CD8-positive, alpha-beta memory T cell (primary cell): ENCODE measurements at regions of chr12 and their contacts with region 1.

Region 1: GRCh38 chr12:56189176-56189917 is at the start of gene SMARCC2:
- DNase-seq: peak; percentile 80 to 90 (median 84)
- H3K4me3 ChIP-seq: peak within 1 kb of the TSS; percentile 95
- H3K4me3 Mint-ChIP-seq: peak within 1 kb of the TSS; percentile 92 to 99 (median 97)
- H3K27ac ChIP-seq: peak within 1 kb of the TSS; percentile 84
- H3K27ac Mint-ChIP-seq: peak within 1 kb of the TSS; percentile 93 to 100 (median 98)
- H3K4me1 ChIP-seq: peaks cover 31% of the 10 kb centered on the region
- H3K4me1 Mint-ChIP-seq: peaks cover 40 to 54% (median 52%) of the 10 kb centered on the region in 3 donors
- H3K27me3 ChIP-seq: no peaks in the 10 kb centered on the region
- H3K27me3 Mint-ChIP-seq: peaks cover 0 to 8% of the 10 kb centered on the region in 2 donors
- total RNA-seq, gene SMARCC2: 107 to 118 TPM

Region 2: DNA sequence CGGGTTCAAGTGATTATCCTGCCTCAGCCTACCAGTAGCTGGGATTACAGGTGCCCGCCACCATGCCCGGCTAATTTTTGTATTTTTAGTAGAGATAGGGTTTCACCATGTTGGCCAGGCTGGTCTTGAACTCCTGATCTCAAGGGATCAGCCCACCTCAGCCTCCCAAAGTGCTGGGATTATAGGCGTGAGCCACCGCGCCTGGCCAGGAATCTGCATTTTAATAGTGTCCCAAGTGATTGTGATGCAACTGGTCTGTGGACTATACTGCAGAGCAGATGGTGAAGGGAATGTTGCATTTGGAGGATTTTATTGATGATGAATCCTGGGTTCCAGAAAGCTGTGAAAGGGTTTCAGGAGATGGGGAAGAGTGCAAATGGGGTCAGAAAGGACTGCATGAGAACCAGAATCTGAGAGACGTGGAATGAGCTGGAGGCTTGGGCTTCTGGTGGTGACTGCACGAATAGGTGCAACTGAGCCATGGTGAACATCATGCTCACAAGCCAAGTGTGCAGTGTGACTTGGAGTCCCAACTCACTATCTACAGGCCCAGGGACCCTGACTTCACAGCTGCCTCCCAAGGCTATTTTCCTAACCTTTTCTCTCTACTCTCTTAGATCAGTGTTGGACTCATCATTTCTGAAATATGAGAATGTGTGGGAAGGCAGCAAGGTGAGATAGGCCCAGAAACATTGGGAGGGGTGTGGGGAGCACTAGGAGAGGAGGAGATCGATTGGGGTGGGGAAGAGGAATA is 143.1 kb before region 1 on chr12:
- CTCF ChIA-PET with region 1: interaction called, 16 read pairs
- POLR2A ChIA-PET with region 1: interaction called, 9 read pairs
- DNase-seq: no peak
- H3K4me3 ChIP-seq: no peak overlapping the region
- H3K4me3 Mint-ChIP-seq: no peak overlapping the region
- H3K27ac ChIP-seq: no peak overlapping the region
- H3K27ac Mint-ChIP-seq: peak overlapping the region in 7 of 8 donors; percentile 50 to 83 (median 63)
- H3K4me1 ChIP-seq: peaks cover 15% of the 10 kb centered on the region
- H3K4me1 Mint-ChIP-seq: peaks cover 26 to 29% (median 29%) of the 10 kb centered on the region in 3 donors
- H3K27me3 ChIP-seq: no peaks in the 10 kb centered on the region
- H3K27me3 Mint-ChIP-seq: peaks cover 0 to 5% of the 10 kb centered on the region in 2 donors

Region 3: DNA sequence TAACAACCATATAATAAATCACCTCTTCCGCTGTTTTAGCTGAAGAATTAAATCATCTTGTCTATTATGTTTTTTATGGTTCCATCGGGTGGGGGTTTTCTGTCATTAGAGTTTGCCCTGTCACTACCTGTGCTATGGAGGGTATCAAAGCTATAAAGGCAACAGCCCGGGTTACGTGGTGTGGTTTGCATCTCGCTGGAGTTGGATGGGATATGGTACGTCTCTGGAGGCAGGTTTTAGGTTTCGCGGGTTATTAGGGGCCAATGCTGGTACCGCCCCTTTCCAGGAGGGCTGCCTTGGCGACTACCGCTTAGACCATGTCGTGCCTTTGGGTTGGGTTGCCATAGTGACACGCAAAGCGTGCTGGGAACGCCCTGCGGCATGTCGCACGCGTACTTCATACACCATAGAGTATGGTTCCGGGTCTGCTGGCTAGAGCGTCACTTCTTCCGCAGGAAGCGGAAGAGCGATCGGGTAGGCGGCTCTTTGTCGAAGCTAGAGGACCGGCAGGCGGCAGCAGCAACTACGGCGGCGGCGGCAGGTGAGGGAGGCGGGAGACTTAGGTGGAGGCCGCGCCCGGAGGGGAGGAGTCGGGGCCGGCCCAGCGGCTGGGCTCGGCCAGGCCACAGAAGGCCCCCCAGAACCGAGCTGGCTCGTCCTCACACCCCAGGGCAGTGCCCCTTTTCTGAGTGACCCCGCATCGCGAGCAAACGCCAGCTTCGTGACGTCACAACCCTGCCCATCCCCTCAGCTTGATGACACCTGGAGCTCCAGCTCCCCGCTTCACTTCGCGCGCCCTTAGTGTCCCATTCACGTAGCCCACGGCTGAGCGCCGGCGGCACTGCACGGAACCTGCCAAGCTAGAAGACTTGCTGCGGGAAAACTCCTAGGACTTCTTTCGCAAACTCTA is 71.3 kb before region 1 on chr12 and contains the start of gene ZC3H10:
- CTCF ChIA-PET with region 1: interaction called, 101 read pairs
- POLR2A ChIA-PET with region 1: interaction called, 60 read pairs
- DNase-seq: peak; percentile 93 to 100 (median 98)
- H3K4me3 ChIP-seq: peak within 1 kb of the TSS; percentile 93
- H3K4me3 Mint-ChIP-seq: peak within 1 kb of the TSS; percentile 89 to 100 (median 99)
- H3K27ac ChIP-seq: peak within 1 kb of the TSS; percentile 99
- H3K27ac Mint-ChIP-seq: peak within 1 kb of the TSS; percentile 96 to 100 (median 98)
- H3K4me1 ChIP-seq: peaks cover 34% of the 10 kb centered on the region
- H3K4me1 Mint-ChIP-seq: peaks cover 37 to 43% (median 38%) of the 10 kb centered on the region in 3 donors
- H3K27me3 ChIP-seq: no peaks in the 10 kb centered on the region
- H3K27me3 Mint-ChIP-seq: peaks cover 0 to 10% of the 10 kb centered on the region in 2 donors
- total RNA-seq, gene ZC3H10: 8.1 to 9.0 TPM

Region 4: GRCh38 chr12:56137853-56138571 is 51.3 kb before region 1 on chr12:
- CTCF ChIA-PET with region 1: interaction called, 10 read pairs
- POLR2A ChIA-PET with region 1: no interaction called
- DNase-seq: peak in 1 of 5 donors; percentile 52
- H3K4me3 ChIP-seq: no peak overlapping the region
- H3K4me3 Mint-ChIP-seq: peak overlapping the region in 4 of 7 donors; percentile 25 to 54 (median 42)
- H3K27ac ChIP-seq: no peak overlapping the region
- H3K27ac Mint-ChIP-seq: peak overlapping the region; percentile 46 to 87 (median 75)
- H3K4me1 ChIP-seq: peaks cover 68% of the 10 kb centered on the region
- H3K4me1 Mint-ChIP-seq: peaks cover 48 to 55% (median 54%) of the 10 kb centered on the region in 3 donors
- H3K27me3 ChIP-seq: no peaks in the 10 kb centered on the region
- H3K27me3 Mint-ChIP-seq: no peaks in the 10 kb centered on the region

Region 5: DNA sequence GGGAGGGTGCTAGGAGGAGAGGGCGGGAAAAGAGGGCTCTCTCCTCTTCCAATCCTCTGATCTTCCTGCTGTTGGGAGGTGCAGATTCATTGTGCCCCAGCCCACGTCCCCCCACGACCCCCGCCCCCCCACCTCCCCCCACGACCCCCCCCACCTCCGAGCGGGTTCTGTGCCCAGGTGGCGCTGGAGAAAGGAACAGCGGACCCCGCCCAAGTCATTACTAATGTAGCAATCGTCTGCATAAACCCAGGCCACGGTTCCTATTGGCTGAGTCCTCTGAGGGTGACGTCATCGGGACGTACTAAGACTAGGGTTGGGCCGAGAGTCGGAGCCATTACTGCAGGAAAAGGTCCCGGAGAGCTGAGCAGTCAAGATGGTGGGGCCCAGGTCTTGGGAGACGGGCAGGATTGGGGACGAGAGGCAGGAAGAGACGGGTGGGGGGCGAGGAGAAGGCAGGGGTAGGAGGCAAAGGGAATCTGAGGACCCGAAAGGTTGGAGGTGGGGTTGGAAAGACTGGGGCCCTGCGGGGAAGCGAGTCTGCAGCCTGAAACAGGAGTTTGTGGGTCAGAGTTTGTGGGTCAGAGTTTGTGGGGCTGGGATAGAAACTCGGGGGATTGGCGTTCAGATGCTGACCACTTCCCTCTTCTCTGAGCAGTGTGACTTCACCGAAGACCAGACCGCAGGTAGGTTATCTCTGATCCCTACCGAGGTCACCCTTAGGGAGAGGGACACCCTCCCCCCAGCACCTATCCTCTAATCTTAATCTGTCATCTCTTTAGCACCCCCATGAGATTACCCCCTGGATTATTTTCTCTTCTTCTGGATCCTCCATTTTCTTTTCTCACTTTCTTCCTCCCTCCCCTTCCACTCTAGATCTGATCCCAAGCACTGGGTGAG is 31.1 kb before region 1 on chr12 and contains the start of gene MYL6:
- CTCF ChIA-PET with region 1: interaction called, 23 read pairs
- POLR2A ChIA-PET with region 1: interaction called, 11 read pairs
- DNase-seq: peak; percentile 84 to 96 (median 88)
- H3K4me3 ChIP-seq: peak within 1 kb of the TSS; percentile 80
- H3K4me3 Mint-ChIP-seq: peak within 1 kb of the TSS; percentile 92 to 100 (median 95)
- H3K27ac ChIP-seq: peak within 1 kb of the TSS; percentile 94
- H3K27ac Mint-ChIP-seq: peak within 1 kb of the TSS; percentile 87 to 100 (median 96)
- H3K4me1 ChIP-seq: peaks cover 38% of the 10 kb centered on the region
- H3K4me1 Mint-ChIP-seq: peaks cover 38 to 48% (median 41%) of the 10 kb centered on the region in 3 donors
- H3K27me3 ChIP-seq: no peaks in the 10 kb centered on the region
- H3K27me3 Mint-ChIP-seq: no peaks in the 10 kb centered on the region
- total RNA-seq, gene MYL6: 1,010 to 1,017 TPM

Region 6: GRCh38 chr12:56206457-56207166 is 17.3 kb after region 1 on chr12:
- CTCF ChIA-PET with region 1: interaction called, 16 read pairs
- POLR2A ChIA-PET with region 1: interaction called, 3 read pairs
- DNase-seq: peak in 3 of 5 donors; percentile 12 to 57 (median 14)
- H3K4me3 ChIP-seq: no peak overlapping the region
- H3K4me3 Mint-ChIP-seq: no peak overlapping the region
- H3K27ac ChIP-seq: no peak overlapping the region
- H3K27ac Mint-ChIP-seq: peak overlapping the region in 5 of 8 donors; percentile 4 to 53 (median 39)
- H3K4me1 ChIP-seq: no peaks in the 10 kb centered on the region
- H3K4me1 Mint-ChIP-seq: peaks cover 0 to 8% (median 0%) of the 10 kb centered on the region in 3 donors
- H3K27me3 ChIP-seq: no peaks in the 10 kb centered on the region
- H3K27me3 Mint-ChIP-seq: no peaks in the 10 kb centered on the region

Region 7: GRCh38 chr12:56243731-56244181 is 54.4 kb after region 1 on chr12:
- CTCF ChIA-PET with region 1: no interaction called
- POLR2A ChIA-PET with region 1: no interaction called
- DNase-seq: no peak
- H3K4me3 ChIP-seq: no peak overlapping the region
- H3K4me3 Mint-ChIP-seq: no peak overlapping the region
- H3K27ac ChIP-seq: no peak overlapping the region
- H3K27ac Mint-ChIP-seq: no peak overlapping the region
- H3K4me1 ChIP-seq: no peaks in the 10 kb centered on the region
- H3K4me1 Mint-ChIP-seq: no peaks in the 10 kb centered on the region
- H3K27me3 ChIP-seq: no peaks in the 10 kb centered on the region
- H3K27me3 Mint-ChIP-seq: no peaks in the 10 kb centered on the region

Region 8: GRCh38 chr12:56266693-56267442 is 77.5 kb after region 1 on chr12 and contains the start of gene COQ10A:
- CTCF ChIA-PET with region 1: interaction called, 3 read pairs
- POLR2A ChIA-PET with region 1: interaction called, 11 read pairs
- DNase-seq: peak; percentile 84 to 93 (median 88)
- H3K4me3 ChIP-seq: peak within 1 kb of the TSS; percentile 93
- H3K4me3 Mint-ChIP-seq: peak within 1 kb of the TSS; percentile 89 to 97 (median 95)
- H3K27ac ChIP-seq: peak within 1 kb of the TSS; percentile 98
- H3K27ac Mint-ChIP-seq: peak within 1 kb of the TSS; percentile 80 to 99 (median 96)
- H3K4me1 ChIP-seq: peaks cover 12% of the 10 kb centered on the region
- H3K4me1 Mint-ChIP-seq: peaks cover 18 to 21% (median 21%) of the 10 kb centered on the region in 3 donors
- H3K27me3 ChIP-seq: no peaks in the 10 kb centered on the region
- H3K27me3 Mint-ChIP-seq: no peaks in the 10 kb centered on the region
- total RNA-seq, gene COQ10A: 14.3 to 14.4 TPM